CD4-positive, alpha-beta T cell (primary cell): ENCODE measurements at regions of chr12 and their contacts with region 1.

Region 1: GRCh38 chr12:44863867-44864266 is 12.2 kb downstream of the NELL2 start:
- DNase-seq: peak in 3 of 14 experiments; percentile 57 to 78 (median 68)
- ATAC-seq: peak; percentile 82
- H3K4me3 ChIP-seq: no peak overlapping the region
- H3K4me3 Mint-ChIP-seq: peak overlapping the region; percentile 13
- H3K27ac ChIP-seq: no peak overlapping the region
- H3K27ac Mint-ChIP-seq: peak overlapping the region; percentile 64
- H3K4me1 ChIP-seq: peaks cover 7% of the 10 kb centered on the region
- H3K4me1 Mint-ChIP-seq: peaks cover 34% of the 10 kb centered on the region
- H3K27me3 ChIP-seq: no peaks in the 10 kb centered on the region
- H3K27me3 Mint-ChIP-seq: no peaks in the 10 kb centered on the region
- CTCF ChIP-seq: no peak

Region 2: DNA sequence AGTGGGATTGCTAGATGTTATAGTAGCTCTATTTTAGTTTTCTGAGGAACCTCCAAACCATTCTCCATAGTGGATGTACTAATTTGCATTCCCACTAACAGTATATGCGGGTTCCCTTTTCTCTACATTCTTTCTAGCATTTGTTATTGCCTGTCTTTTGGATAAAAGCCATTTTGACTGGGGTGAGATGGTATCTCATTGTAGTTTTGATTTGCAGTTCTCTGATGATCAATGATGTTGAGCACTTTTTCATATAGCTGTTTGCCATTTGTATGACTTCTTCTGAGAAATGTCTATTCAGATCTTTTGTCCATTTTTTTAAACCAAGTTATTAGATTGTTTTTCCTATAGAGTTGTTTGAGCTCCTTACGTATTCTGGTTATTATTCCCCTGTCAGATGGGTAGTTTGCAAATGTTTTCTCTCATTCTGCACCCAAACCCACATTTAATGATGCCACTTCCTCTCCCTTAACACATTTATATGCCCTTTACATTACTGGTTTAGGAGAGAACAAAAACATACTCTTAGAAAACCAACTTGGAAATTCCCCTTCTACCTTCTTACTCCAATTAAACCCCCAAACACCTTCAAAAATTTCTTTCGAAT is 35.9 kb before region 1 on chr12:
- CTCF ChIA-PET with region 1: interaction called, 3 read pairs
- POLR2A ChIA-PET with region 1: interaction called, 9 read pairs
- intact Hi-C with region 1: loop called in 1 of 2 experiments (anchors 2 kb)
- DNase-seq: peak in 3 of 14 experiments; percentile 76 to 79 (median 77)
- ATAC-seq: peak; percentile 86
- H3K4me3 ChIP-seq: peak overlapping the region; percentile 17
- H3K4me3 Mint-ChIP-seq: peak overlapping the region; percentile 78
- H3K27ac ChIP-seq: peak overlapping the region; percentile 48 to 59
- H3K27ac Mint-ChIP-seq: peak overlapping the region; percentile 94
- H3K4me1 ChIP-seq: peaks cover 23% of the 10 kb centered on the region
- H3K4me1 Mint-ChIP-seq: peaks cover 67% of the 10 kb centered on the region
- H3K27me3 ChIP-seq: no peaks in the 10 kb centered on the region
- H3K27me3 Mint-ChIP-seq: no peaks in the 10 kb centered on the region
- CTCF ChIP-seq: no peak

Region 3: DNA sequence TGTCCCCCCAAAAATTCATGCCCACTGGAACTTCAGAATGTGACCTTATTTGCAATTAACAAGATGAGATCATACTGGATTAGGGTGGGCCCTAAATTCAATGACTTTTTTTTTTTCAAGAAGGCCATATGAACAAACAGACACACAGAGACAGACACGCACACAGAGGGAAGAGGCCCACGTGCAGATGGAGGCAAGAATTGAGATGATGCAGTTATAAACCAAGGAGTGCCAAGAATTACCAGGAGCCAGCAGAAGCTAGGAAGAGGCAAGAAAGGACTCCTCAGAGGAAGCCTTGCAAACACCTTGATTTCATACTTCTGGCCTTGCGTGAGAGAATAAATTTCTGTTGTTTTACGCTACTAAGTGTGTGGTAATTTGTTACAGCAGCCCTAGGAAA is 21.2 kb before region 1 on chr12:
- CTCF ChIA-PET with region 1: no interaction called
- POLR2A ChIA-PET with region 1: interaction called, 53 read pairs
- intact Hi-C with region 1: no loop called
- DNase-seq: peak in 1 of 14 experiments; percentile 17
- ATAC-seq: peak; percentile 28
- H3K4me3 ChIP-seq: no peak overlapping the region
- H3K4me3 Mint-ChIP-seq: peak overlapping the region; percentile 44
- H3K27ac ChIP-seq: no peak overlapping the region
- H3K27ac Mint-ChIP-seq: peak overlapping the region; percentile 98
- H3K4me1 ChIP-seq: peaks cover 18% of the 10 kb centered on the region
- H3K4me1 Mint-ChIP-seq: peaks cover 92% of the 10 kb centered on the region
- H3K27me3 ChIP-seq: no peaks in the 10 kb centered on the region
- H3K27me3 Mint-ChIP-seq: no peaks in the 10 kb centered on the region
- CTCF ChIP-seq: no peak